KBM-7 (cell line): ENCODE measurements at regions of chr9 and their contacts with region 1.

Region 1: GRCh38 chr9:120792898-120793765 is at the start of gene FBXW2:
- DNase-seq: peak; percentile 95

Region 2: DNA sequence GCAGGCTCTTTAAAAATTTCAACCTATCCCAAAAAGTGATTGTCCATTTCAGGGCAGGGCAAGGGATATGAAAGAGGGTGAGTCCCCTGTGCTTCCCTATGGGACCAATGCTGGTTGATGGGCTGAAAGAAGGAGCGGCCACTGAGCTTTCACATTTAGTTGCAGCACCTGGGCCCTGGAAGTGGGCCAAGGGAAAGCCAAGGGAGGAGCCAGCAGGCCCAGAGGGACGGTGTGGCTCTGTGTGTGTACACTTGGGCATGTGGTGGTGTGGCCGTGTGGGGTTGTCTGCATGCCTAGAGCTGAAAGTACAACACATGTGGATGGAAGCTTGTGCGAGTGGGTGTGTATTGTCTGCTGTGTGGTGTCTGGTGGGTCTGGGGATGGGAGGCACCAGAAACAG is 63.6 kb after region 1 on chr9:
- in situ Hi-C with region 1: loop called (anchors 10 kb)
- DNase-seq: no peak